ENCODE measurements at regions of chr11 and their contacts with region 1.

Region 1: DNA sequence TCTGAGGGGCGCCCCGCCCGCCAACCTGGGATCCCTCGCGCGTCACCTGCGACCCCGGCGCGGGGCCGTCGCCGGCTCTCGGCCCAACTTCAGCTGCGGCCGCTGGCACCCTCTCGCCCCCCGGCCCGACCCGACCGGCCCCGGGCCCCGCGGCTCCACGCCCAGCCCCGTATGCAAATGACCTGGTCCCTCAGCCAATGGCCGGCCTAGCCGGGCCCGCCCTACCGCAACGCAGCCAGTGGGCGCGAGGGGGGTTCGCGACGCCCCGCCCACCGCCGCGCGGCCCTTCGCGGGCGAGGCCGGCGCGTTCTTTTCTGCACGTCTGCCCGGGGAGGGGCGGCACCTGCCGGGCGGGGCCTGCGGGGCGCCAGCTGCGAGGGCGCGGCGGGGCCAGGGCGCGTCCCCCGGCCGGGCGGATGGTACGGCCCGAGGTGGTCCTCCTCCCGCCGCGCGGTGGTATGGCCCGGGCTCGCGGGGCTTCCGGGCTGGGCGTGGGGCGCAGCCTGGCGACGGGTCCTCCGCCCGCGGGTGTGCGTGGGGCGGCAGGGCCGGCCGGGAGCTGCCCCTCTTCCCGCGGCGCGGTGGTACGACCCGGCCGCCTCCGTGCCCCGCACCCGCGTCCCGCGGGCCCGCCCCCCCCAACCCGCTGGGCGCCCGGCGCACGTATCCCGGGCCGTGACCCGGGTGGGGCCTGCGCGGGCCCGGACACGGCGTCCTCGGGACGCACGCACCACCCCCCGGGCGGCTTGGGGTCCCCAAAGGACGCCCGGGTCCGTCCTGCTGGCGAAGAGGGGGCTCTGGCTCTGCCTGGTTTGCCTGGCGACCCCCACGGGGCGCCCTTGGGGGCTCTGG is 7.7 kb upstream of the PHRF1 start:
- DNase-seq: peak; percentile 45
- ATAC-seq: peak; percentile 94
- H3K4me3 ChIP-seq: peak overlapping the region; percentile 61 to 68
- H3K27ac ChIP-seq: peak overlapping the region; percentile 90
- H3K4me1 ChIP-seq: peaks cover 35% of the 10 kb centered on the region
- H3K27me3 ChIP-seq: no peaks in the 10 kb centered on the region
- CTCF ChIP-seq: no peak

Region 2: GRCh38 chr11:548700-549603 is 19.6 kb before region 1 on chr11:
- CTCF ChIA-PET with region 1: interaction called, 10 read pairs
- POLR2A ChIA-PET with region 1: no interaction called
- in situ Hi-C with region 1: no loop called
- intact Hi-C with region 1: no loop called
- DNase-seq: no peak
- ATAC-seq: peak; percentile 9; the same call in 1 of the 2 replicates
- H3K4me3 ChIP-seq: no peak overlapping the region
- H3K27ac ChIP-seq: no peak overlapping the region
- H3K4me1 ChIP-seq: peaks cover 10% of the 10 kb centered on the region
- H3K27me3 ChIP-seq: no peaks in the 10 kb centered on the region
- CTCF ChIP-seq: no peak